WTC11 (cell line): ENCODE measurements at regions of chr13 and their contacts with region 1.

Region 1: GRCh38 chr13:23960566-23961156 is 63.4 kb upstream of the C1QTNF9B start:
- DNase-seq: no peak
- ATAC-seq: peak; percentile 71
- H3K4me3 Mint-ChIP-seq: no peak overlapping the region
- H3K27ac Mint-ChIP-seq: no peak overlapping the region
- H3K4me1 Mint-ChIP-seq: peaks cover 7% of the 10 kb centered on the region
- H3K27me3 Mint-ChIP-seq: no peaks in the 10 kb centered on the region
- CTCF ChIP-seq: peak; percentile 53

Region 2: GRCh38 chr13:23888658-23889614 is 71.7 kb before region 1 on chr13 and contains the start of gene MIPEP:
- CTCF ChIA-PET with region 1: interaction called, 11 read pairs
- POLR2A ChIA-PET with region 1: no interaction called
- DNase-seq: peak; percentile 92
- ATAC-seq: peak; percentile 89
- H3K4me3 Mint-ChIP-seq: peak within 1 kb of the TSS; percentile 77
- H3K27ac Mint-ChIP-seq: peak within 1 kb of the TSS; percentile 57; the same call in 1 of the 2 replicates
- H3K4me1 Mint-ChIP-seq: peaks cover 19% of the 10 kb centered on the region
- H3K27me3 Mint-ChIP-seq: no peaks in the 10 kb centered on the region; the same call in 1 of the 2 replicates
- CTCF ChIP-seq: peak; percentile 21; the same call in 1 of the 2 replicates
- total RNA-seq, gene MIPEP: 24.8 to 30.5 TPM (median 28.1 TPM) in 3 replicates

Region 3: GRCh38 chr13:23921451-23921888 is 39.2 kb before region 1 on chr13:
- CTCF ChIA-PET with region 1: interaction called, 41 read pairs
- POLR2A ChIA-PET with region 1: no interaction called
- DNase-seq: peak; percentile 53
- ATAC-seq: peak; percentile 99
- H3K4me3 Mint-ChIP-seq: no peak overlapping the region
- H3K27ac Mint-ChIP-seq: no peak overlapping the region
- H3K4me1 Mint-ChIP-seq: peaks cover 21% of the 10 kb centered on the region
- H3K27me3 Mint-ChIP-seq: no peaks in the 10 kb centered on the region
- CTCF ChIP-seq: peak; percentile 85

Region 4: GRCh38 chr13:23945612-23946011 is 15.0 kb before region 1 on chr13:
- CTCF ChIA-PET with region 1: interaction called, 24 read pairs
- POLR2A ChIA-PET with region 1: no interaction called
- DNase-seq: peak; percentile 16
- ATAC-seq: no peak
- H3K4me3 Mint-ChIP-seq: no peak overlapping the region; the same call in 1 of the 2 replicates
- H3K27ac Mint-ChIP-seq: no peak overlapping the region
- H3K4me1 Mint-ChIP-seq: no peaks in the 10 kb centered on the region
- H3K27me3 Mint-ChIP-seq: no peaks in the 10 kb centered on the region
- CTCF ChIP-seq: no peak

Region 5: GRCh38 chr13:23980160-23980551 is 19.5 kb after region 1 on chr13:
- CTCF ChIA-PET with region 1: interaction called, 13 read pairs
- POLR2A ChIA-PET with region 1: no interaction called
- DNase-seq: peak; percentile 92
- ATAC-seq: peak; percentile 76
- H3K4me3 Mint-ChIP-seq: peak overlapping the region; percentile 90
- H3K27ac Mint-ChIP-seq: no peak overlapping the region
- H3K4me1 Mint-ChIP-seq: peaks cover 11% of the 10 kb centered on the region
- H3K27me3 Mint-ChIP-seq: peaks cover 15% of the 10 kb centered on the region
- CTCF ChIP-seq: no peak

Region 6: GRCh38 chr13:24005755-24006281 is 45.2 kb after region 1 on chr13:
- CTCF ChIA-PET with region 1: interaction called, 10 read pairs
- POLR2A ChIA-PET with region 1: no interaction called
- DNase-seq: no peak
- ATAC-seq: no peak
- H3K4me3 Mint-ChIP-seq: no peak overlapping the region
- H3K27ac Mint-ChIP-seq: no peak overlapping the region; the same call in 1 of the 2 replicates
- H3K4me1 Mint-ChIP-seq: peaks cover 21% of the 10 kb centered on the region
- H3K27me3 Mint-ChIP-seq: no peaks in the 10 kb centered on the region; the same call in 1 of the 2 replicates
- CTCF ChIP-seq: no peak